H1 (cell line): ENCODE measurements at regions of chr1 and their contacts with region 1.

Region 1: DNA sequence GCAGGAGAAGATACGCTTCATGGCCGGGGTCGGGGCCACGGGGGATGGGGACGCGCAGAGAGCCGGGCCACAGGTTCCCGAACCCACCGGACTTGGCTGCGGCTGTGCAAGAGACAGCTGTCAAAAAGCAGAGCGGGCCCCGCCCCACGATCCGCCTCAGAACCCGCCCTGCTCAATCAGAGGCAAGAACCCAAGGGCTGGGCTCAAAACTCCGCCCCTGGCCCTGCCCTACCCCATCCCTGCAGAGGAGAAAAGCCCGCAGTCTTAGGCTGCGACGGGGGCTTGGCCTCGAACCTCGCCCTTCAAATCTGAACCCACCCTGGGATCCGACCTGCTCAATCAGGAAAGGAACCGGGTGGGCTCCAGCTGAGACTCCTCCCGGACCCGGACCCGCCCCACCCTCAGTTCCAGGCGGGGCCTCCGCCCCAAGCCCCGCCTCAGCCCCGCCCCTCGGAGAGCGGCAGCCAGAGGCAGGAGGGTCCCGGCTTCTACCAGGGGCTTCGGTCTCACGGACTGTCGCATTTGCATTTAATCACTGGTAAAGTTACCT is at the start of gene ANKRD35:
- DNase-seq: peak in 1 of 2 experiments; percentile 90
- H3K4me3 ChIP-seq: peak within 1 kb of the TSS; percentile 44 to 72 (median 67)
- H3K27ac ChIP-seq: no peak within 1 kb of the TSS
- H3K4me1 ChIP-seq: no peaks in the 10 kb centered on the region; a peak in 1 of 7 replicates
- H3K27me3 ChIP-seq: peaks cover 0 to 21% (median 15%) of the 10 kb centered on the region in 4 experiments; a peak in 6 of 7 replicates
- CTCF ChIP-seq: no peak
- EP300 ChIP-seq: no peak
- POLR2A ChIP-seq: no peak
- RAD21 ChIP-seq: no peak
- total RNA-seq, gene ANKRD35: 2.2 and 3.0 TPM in 2 replicates

Region 2: GRCh38 chr1:145740266-145740665 is 145.5 kb before region 1 on chr1:
- CTCF ChIA-PET with region 1: no interaction called
- POLR2A ChIA-PET with region 1: no interaction called
- DNase-seq: no peak
- H3K4me3 ChIP-seq: no peak overlapping the region
- H3K27ac ChIP-seq: no peak overlapping the region
- H3K4me1 ChIP-seq: no peaks in the 10 kb centered on the region
- H3K27me3 ChIP-seq: no peaks in the 10 kb centered on the region
- CTCF ChIP-seq: no peak
- EP300 ChIP-seq: no peak
- POLR2A ChIP-seq: no peak
- RAD21 ChIP-seq: no peak

Region 3: GRCh38 chr1:145871994-145872924 is 13.6 kb before region 1 on chr1:
- CTCF ChIA-PET with region 1: interaction called, 18 read pairs
- POLR2A ChIA-PET with region 1: interaction called, 7 read pairs
- DNase-seq: peak in 1 of 2 experiments; percentile 82
- H3K4me3 ChIP-seq: peak overlapping the region; percentile 36 to 62 (median 52)
- H3K27ac ChIP-seq: no peak overlapping the region
- H3K4me1 ChIP-seq: peaks cover 0 to 11% (median under 1%) of the 10 kb centered on the region in 4 experiments; a peak in 4 of 7 replicates
- H3K27me3 ChIP-seq: peaks cover 0 to 24% (median 12%) of the 10 kb centered on the region in 4 experiments; a peak in 6 of 7 replicates
- CTCF ChIP-seq: no peak
- EP300 ChIP-seq: no peak
- POLR2A ChIP-seq: 0 out of 3 replicates have a peak, but pooled peaks of 1 of the 2 experiments have one; percentile 19
- RAD21 ChIP-seq: no peak

Region 4: GRCh38 chr1:145912128-145912641 is 26.4 kb after region 1 on chr1:
- CTCF ChIA-PET with region 1: interaction called, 146 read pairs
- POLR2A ChIA-PET with region 1: no interaction called
- DNase-seq: no peak
- H3K4me3 ChIP-seq: no peak overlapping the region
- H3K27ac ChIP-seq: no peak overlapping the region
- H3K4me1 ChIP-seq: peaks cover 0 to 3% (median 0%) of the 10 kb centered on the region in 4 experiments; a peak in 2 of 7 replicates
- H3K27me3 ChIP-seq: no peaks in the 10 kb centered on the region
- CTCF ChIP-seq: no peak
- EP300 ChIP-seq: no peak
- POLR2A ChIP-seq: no peak
- RAD21 ChIP-seq: no peak